Psoas muscle (tissue), 8 donors: ENCODE measurements at regions of chr3 and their contacts with region 1.

Region 1: DNA sequence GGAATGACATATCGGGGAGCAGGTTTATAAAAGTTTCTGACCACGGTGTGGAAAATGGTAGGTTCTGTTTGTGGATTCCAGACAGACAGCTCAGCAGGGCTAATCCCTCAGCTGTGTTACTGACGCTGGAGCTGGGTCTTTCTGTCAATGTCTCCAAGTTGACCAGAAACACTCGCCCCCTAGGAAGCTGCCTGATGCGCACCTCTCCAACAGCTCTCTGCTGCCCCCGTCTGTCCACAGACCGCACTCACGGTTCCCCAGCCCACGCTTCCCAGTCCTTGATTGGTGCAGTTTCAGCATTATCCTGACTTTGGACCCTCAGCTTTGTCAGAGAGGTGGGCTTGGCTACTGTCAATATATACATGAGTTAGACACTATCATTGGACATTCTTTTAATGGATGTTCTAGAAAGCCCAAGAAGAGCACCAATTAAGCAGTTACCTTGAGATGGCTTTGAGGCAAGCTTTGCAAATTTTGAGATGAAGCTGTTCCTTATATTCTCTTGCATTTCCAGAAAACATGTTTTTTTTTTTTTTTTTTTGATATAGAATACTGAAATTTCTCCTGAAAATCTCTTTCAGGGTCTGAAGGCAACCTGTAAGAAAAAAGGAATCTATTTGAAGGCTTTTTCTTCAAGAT is 98.9 kb upstream of the TBC1D5 start:
- DNase-seq: peak; percentile 64 to 83
- ATAC-seq: peak; percentile 73 to 95 (median 88)
- H3K4me3 ChIP-seq: no peak overlapping the region
- H3K27ac ChIP-seq: no peak overlapping the region
- H3K4me1 ChIP-seq: no peaks in the 10 kb centered on the region
- H3K27me3 ChIP-seq: peaks cover 0 to 8% (median 0%) of the 10 kb centered on the region in 3 donors
- CTCF ChIP-seq: peak; percentile 94

Region 2: GRCh38 chr3:17258823-17259436 is 582.4 kb before region 1 on chr3:
- intact Hi-C with region 1: loop called (anchors 5 to 10 kb)
- DNase-seq: no peak
- ATAC-seq: no peak
- H3K4me3 ChIP-seq: no peak overlapping the region
- H3K27ac ChIP-seq: no peak overlapping the region
- H3K4me1 ChIP-seq: no peaks in the 10 kb centered on the region
- H3K27me3 ChIP-seq: no peaks in the 10 kb centered on the region
- CTCF ChIP-seq: peak; percentile 79

Region 3: GRCh38 chr3:17431004-17431403 is 410.3 kb before region 1 on chr3:
- intact Hi-C with region 1: loop called (anchors 2 kb)
- DNase-seq: no peak
- ATAC-seq: peak; percentile 53 to 85 (median 72)
- H3K4me3 ChIP-seq: no peak overlapping the region
- H3K27ac ChIP-seq: no peak overlapping the region
- H3K4me1 ChIP-seq: peaks cover 9% of the 10 kb centered on the region
- H3K27me3 ChIP-seq: no peaks in the 10 kb centered on the region
- CTCF ChIP-seq: peak; percentile 55

Region 4: DNA sequence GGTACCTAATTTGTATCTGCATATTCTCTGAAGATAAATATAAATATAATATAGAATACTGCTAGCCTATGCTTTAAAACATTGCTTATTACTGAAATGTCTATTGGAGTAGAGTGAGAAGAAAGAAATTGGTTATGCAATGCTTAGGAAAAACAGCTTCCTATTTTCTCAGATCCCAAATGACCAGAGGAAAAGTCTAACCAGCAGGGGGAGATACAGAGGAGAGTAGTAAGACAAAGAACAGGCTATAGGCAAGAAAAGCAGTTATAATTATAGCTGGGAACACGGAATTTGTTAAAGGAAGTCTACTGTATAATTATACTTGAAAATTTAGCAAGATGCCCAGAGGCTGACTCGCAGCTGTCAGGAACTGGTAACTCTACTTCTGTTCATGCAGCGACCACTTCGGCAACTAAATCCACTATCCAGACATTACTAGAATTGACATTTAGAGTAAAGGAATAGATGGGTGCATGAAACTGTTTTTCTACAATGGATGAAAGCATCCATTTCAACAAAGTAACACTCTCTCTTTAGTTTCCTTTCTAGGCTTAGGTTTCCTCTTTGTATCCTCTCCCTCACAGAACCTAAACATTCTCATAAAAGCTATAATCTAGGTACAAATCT is 196.1 kb before region 1 on chr3:
- intact Hi-C with region 1: loop called (anchors 5 to 10 kb)
- DNase-seq: no peak
- ATAC-seq: peak in 2 of 4 donors; percentile 42 to 74
- H3K4me3 ChIP-seq: no peak overlapping the region
- H3K27ac ChIP-seq: no peak overlapping the region
- H3K4me1 ChIP-seq: peaks cover 5% of the 10 kb centered on the region
- H3K27me3 ChIP-seq: no peaks in the 10 kb centered on the region
- CTCF ChIP-seq: peak; percentile 69

Region 5: DNA sequence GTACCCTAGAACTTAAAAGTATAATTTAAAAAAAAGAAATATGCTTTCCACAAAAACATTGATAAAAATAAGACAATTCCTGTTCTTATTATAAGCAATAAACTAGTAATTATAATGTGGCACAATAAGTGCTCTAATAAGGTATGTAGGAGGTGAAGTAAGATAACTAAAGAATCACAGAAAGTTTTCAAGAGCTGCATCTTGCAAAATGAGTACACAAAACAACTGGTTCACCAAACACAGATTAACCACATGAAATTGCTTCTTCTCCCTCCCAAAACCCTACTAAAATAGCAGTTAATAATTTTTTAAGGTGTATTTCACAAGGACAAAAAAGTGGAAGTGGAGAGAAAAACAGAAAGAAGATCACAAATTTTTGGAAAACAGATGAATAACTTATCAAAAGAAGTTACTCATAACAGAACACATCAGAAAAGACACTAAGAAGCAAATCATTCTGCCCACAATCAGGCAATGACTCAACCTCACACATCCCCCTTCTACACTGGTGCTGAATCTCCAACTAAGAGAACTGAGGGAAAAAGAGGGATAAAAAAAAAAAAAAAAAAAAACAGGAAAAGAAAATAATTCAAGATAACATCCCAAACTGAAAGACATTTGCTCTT is 163.1 kb before region 1 on chr3:
- intact Hi-C with region 1: no loop called
- DNase-seq: no peak
- ATAC-seq: no peak
- H3K4me3 ChIP-seq: no peak overlapping the region
- H3K27ac ChIP-seq: no peak overlapping the region
- H3K4me1 ChIP-seq: peaks cover 5% of the 10 kb centered on the region
- H3K27me3 ChIP-seq: no peaks in the 10 kb centered on the region
- CTCF ChIP-seq: no peak

Region 6: GRCh38 chr3:17747174-17747889 is 94.0 kb before region 1 on chr3:
- intact Hi-C with region 1: loop called in 1 of 2 experiments (anchors 5 kb)
- DNase-seq: no peak
- ATAC-seq: no peak
- H3K4me3 ChIP-seq: no peak overlapping the region
- H3K27ac ChIP-seq: no peak overlapping the region
- H3K4me1 ChIP-seq: peaks cover 8% of the 10 kb centered on the region
- H3K27me3 ChIP-seq: peaks cover 0 to under 1% (median 0%) of the 10 kb centered on the region in 3 donors
- CTCF ChIP-seq: no peak